ENCODE measurements at regions of chr17 and their contacts with region 1.

Region 1: GRCh38 chr17:76452660-76453430 is at the start of gene UBE2O:
- DNase-seq: peak; percentile 66 to 77
- ATAC-seq: peak; percentile 88 to 90
- H3K4me3 ChIP-seq: peak within 1 kb of the TSS; percentile 74 to 96 (median 81)
- H3K27ac ChIP-seq: peak within 1 kb of the TSS; percentile 78 to 98 (median 88)
- H3K4me1 ChIP-seq: peaks cover 25% of the 10 kb centered on the region in 2 donors
- H3K27me3 ChIP-seq: no peaks in the 10 kb centered on the region
- CTCF ChIP-seq: peak in 4 of 5 experiments; percentile 22 to 53 (median 37)
- POLR2A ChIP-seq: peak; percentile 91
- total RNA-seq, gene UBE2O: 16.4 to 46.5 (median 32.4) TPM

Region 2: DNA sequence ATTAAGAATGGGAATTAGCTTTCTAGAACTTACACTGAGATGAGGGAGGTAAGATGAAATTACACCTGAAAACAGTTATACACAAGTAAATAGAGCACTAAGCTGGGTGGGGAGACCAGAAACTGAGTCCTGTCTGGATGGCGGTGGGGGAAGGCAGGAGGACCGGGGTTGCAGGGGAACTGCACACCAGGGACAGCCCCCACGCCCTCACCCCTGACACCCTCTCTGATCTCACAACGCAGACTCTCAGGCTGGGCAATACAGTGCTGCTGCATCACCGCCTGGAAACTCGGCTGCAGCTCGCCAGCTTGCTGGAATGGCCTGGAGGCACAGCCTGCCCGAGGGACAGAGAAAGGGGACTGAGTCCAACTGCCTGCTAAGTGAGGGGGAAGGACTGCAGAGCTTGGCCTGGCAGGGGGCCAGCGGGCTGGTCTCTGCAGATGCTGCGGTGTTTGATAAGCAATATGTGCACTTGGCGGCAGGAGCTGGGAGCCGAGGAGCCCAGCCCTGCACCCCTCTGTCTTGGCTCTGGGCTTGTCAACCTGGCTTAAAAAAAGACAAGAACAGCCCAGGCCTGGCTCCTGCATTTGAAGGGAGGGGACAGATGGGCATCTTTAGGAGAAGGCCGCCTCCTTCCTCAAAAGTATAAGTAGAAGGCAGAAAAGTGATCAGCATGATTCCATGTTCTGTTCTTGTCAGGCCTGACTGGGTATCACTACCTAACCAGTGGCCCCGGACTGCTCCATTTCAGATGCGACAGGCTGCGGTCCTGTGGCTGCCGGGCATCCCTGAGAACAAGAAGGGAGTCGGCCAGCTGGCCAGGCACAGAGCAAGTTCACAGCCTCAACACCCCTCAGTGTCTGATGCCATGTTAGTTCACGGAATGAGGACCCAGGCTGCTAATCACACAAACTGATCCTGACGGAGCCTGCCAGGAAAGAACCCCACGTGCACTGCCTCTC is 38.2 kb before region 1 on chr17:
- in situ Hi-C with region 1: no loop called
- intact Hi-C with region 1: loop called (anchors 5 kb)
- DNase-seq: no peak
- ATAC-seq: no peak
- H3K4me3 ChIP-seq: no peak overlapping the region
- H3K27ac ChIP-seq: peak overlapping the region in 3 of 4 donors; percentile 5 to 46 (median 24)
- H3K4me1 ChIP-seq: peaks cover 41 to 47% of the 10 kb centered on the region in 2 donors
- H3K27me3 ChIP-seq: no peaks in the 10 kb centered on the region
- CTCF ChIP-seq: no peak
- POLR2A ChIP-seq: no peak

Region 3: DNA sequence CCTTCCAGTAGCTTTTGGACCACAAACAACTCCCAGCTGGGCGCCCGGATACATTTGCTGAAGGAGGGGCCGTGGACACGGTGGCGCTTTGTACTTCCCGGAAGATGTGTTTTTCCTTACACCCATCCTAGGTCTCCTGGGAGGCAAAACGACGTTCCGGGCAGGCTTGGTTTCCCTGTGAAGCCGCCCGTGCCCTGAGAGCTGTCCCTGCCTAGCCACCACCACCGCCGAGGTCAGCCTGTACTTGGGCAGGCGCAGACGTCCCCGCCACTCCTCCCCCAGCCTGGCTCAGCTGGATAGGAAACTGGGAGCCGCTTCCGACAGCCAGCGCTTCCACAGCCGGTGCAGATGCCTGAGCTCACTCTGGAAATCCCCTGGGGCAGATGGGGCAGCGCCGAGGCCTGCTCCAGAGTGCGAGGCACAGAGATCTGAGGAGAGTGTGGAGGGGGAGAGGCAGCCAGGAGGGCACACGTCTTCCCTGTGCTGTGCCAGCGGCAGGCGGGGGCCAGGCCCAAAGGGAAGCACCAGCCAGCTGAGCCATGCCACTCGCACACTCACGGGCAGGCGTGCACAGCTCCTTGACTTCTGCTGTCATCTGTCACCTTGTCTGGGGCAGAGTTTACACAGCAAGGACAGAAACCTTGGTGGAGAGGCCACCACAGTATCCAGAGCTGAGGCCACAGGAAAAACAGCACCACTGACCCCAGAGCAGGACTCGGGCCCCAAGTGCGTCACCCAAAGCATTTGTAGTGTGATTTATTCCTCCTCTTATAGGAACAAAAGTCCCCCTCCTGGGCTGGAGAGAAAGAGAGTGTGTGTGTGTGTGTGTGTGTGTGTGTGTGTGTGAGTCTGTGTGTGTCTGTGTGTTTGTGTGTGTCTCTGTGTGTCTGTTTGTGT is 45.4 kb after region 1 on chr17:
- in situ Hi-C with region 1: no loop called
- intact Hi-C with region 1: loop called (anchors 2 kb)
- DNase-seq: peak; percentile 74 to 84
- ATAC-seq: peak; percentile 55 to 57
- H3K4me3 ChIP-seq: peak overlapping the region; percentile 18 to 47 (median 38)
- H3K27ac ChIP-seq: peak overlapping the region; percentile 90 to 94 (median 92)
- H3K4me1 ChIP-seq: peaks cover 50 to 56% of the 10 kb centered on the region in 2 donors
- H3K27me3 ChIP-seq: no peaks in the 10 kb centered on the region
- CTCF ChIP-seq: no peak
- POLR2A ChIP-seq: peak; percentile 41 to 43